ENCODE measurements at regions of chr17 and their contacts with region 1.

Region 1: GRCh38 chr17:59220376-59221158 is at the start of gene GDPD1:
- DNase-seq: peak; percentile 94 to 99 (median 97)
- ATAC-seq: peak; percentile 97
- H3K4me3 ChIP-seq: peak within 1 kb of the TSS; percentile 67
- H3K4me3 Mint-ChIP-seq: peak within 1 kb of the TSS; percentile 96
- H3K27ac ChIP-seq: peak within 1 kb of the TSS; percentile 66 to 87
- H3K27ac Mint-ChIP-seq: peak within 1 kb of the TSS; percentile 99
- H3K4me1 ChIP-seq: peaks cover 10% of the 10 kb centered on the region
- H3K4me1 Mint-ChIP-seq: peaks cover 16% of the 10 kb centered on the region
- H3K27me3 ChIP-seq: no peaks in the 10 kb centered on the region
- H3K27me3 Mint-ChIP-seq: no peaks in the 10 kb centered on the region
- CTCF ChIP-seq: peak; percentile 79
- total RNA-seq, gene GDPD1: 2.0 to 2.3 TPM

Region 2: DNA sequence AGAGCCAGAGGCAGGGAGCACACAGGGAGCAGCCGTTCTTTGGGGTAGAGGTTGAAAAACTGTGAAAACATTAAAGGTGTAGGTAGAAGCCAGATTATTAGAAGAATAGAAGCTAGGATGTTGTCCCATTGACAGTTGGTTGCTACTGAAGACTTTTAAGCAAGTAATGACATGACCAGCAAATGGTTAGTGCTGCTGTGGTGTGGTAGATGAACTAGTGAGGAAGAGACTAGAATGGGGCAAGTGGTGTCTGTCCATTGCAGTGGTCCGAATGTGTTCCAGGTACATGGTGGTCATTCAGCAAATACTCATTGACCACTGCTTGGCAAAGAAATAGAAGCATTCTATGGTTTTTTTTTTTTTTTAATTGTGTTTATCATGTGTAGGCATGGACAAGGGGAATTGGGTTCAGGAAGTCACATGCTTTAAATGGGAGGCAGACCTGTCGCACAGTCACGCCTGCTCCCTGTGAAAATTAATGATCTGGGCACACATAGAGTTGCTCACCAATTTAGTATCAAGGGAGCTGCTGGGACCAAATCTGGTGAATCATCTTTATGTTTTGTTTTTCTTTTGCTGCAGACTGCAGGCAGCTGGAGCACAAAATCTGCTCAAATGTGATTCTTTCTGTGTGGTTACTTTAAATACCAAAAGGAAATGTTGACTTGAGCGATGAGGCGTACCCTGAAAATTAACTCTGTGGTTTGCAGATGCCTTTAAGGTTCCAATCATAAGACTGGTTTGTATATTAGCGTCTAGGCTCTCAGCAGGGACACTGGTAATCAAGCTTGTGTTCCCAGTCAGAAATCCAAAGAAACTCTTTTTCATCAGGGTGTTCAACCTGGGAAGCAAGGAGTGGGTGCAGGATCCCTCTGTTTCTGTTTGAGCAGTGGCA is 141.6 kb after region 1 on chr17:
- CTCF ChIA-PET with region 1: no interaction called
- POLR2A ChIA-PET with region 1: no interaction called
- intact Hi-C with region 1: no loop called
- DNase-seq: peak; percentile 12 to 68 (median 30)
- ATAC-seq: peak; percentile 69
- H3K4me3 ChIP-seq: peak overlapping the region; percentile 45
- H3K4me3 Mint-ChIP-seq: peak overlapping the region; percentile 69
- H3K27ac ChIP-seq: peak overlapping the region; percentile 64 to 65
- H3K27ac Mint-ChIP-seq: peak overlapping the region; percentile 89
- H3K4me1 ChIP-seq: peaks cover 86% of the 10 kb centered on the region
- H3K4me1 Mint-ChIP-seq: peaks cover 89% of the 10 kb centered on the region
- H3K27me3 ChIP-seq: no peaks in the 10 kb centered on the region
- H3K27me3 Mint-ChIP-seq: no peaks in the 10 kb centered on the region
- CTCF ChIP-seq: no peak

Region 3: DNA sequence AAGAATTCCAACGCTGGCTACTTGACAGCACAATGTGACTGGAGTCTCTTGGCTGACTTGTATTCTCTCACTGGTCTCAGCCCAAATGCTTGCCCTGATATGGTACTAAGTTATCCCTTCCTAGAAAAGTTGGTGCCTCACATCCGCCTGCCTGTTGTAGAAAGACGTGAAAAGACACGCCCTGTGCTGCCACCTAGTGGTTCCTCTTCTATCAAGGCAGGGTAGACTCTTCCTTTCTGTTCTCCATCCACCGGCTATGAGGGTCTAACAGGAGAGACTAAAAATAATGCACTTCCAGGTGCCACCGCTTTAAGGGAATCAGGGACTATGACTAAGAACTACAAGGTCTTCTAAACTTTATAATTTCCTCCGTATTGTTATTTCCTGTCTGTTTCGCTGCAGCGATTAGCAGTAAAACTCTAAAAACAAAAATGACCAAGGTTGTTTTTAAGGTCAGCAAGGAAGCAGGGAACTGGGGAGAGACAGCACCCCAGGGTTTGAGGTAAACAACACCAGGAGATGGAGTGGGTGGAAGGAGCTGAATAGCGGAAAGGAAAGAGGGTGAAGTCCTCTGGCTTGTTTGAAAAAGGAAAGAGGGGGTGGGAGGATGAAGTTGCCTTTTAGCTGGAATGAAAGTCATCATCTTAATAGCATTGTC is 220.3 kb after region 1 on chr17:
- CTCF ChIA-PET with region 1: no interaction called
- POLR2A ChIA-PET with region 1: no interaction called
- intact Hi-C with region 1: loop called (anchors 1 to 5 kb)
- DNase-seq: peak; percentile 69 to 96 (median 84)
- ATAC-seq: peak; percentile 98
- H3K4me3 ChIP-seq: no peak overlapping the region
- H3K4me3 Mint-ChIP-seq: peak overlapping the region; percentile 9
- H3K27ac ChIP-seq: no peak overlapping the region
- H3K27ac Mint-ChIP-seq: peak overlapping the region; percentile 1
- H3K4me1 ChIP-seq: peaks cover 18% of the 10 kb centered on the region
- H3K4me1 Mint-ChIP-seq: peaks cover 19% of the 10 kb centered on the region
- H3K27me3 ChIP-seq: no peaks in the 10 kb centered on the region
- H3K27me3 Mint-ChIP-seq: no peaks in the 10 kb centered on the region
- CTCF ChIP-seq: peak; percentile 87